Calu3 (cell line): ENCODE measurements at regions of chr4 and their contacts with region 1.

Region 1: GRCh38 chr4:169404960-169405359 is 134.2 kb upstream of the SH3RF1 start:
- DNase-seq: no peak
- H3K4me3 Mint-ChIP-seq: no peak overlapping the region
- H3K27ac Mint-ChIP-seq: no peak overlapping the region
- H3K4me1 Mint-ChIP-seq: no peaks in the 10 kb centered on the region
- H3K27me3 Mint-ChIP-seq: no peaks in the 10 kb centered on the region
- CTCF ChIP-seq: no peak

Region 2: GRCh38 chr4:169045862-169046584 is 358.9 kb before region 1 on chr4:
- CTCF ChIA-PET with region 1: interaction called, 17 read pairs
- intact Hi-C with region 1: no loop called
- DNase-seq: no peak
- H3K4me3 Mint-ChIP-seq: no peak overlapping the region
- H3K27ac Mint-ChIP-seq: no peak overlapping the region
- H3K4me1 Mint-ChIP-seq: no peaks in the 10 kb centered on the region
- H3K27me3 Mint-ChIP-seq: no peaks in the 10 kb centered on the region
- CTCF ChIP-seq: no peak